CD4-positive, alpha-beta T cell (primary cell): ENCODE measurements at regions of chr2 and their contacts with region 1.

Region 1: DNA sequence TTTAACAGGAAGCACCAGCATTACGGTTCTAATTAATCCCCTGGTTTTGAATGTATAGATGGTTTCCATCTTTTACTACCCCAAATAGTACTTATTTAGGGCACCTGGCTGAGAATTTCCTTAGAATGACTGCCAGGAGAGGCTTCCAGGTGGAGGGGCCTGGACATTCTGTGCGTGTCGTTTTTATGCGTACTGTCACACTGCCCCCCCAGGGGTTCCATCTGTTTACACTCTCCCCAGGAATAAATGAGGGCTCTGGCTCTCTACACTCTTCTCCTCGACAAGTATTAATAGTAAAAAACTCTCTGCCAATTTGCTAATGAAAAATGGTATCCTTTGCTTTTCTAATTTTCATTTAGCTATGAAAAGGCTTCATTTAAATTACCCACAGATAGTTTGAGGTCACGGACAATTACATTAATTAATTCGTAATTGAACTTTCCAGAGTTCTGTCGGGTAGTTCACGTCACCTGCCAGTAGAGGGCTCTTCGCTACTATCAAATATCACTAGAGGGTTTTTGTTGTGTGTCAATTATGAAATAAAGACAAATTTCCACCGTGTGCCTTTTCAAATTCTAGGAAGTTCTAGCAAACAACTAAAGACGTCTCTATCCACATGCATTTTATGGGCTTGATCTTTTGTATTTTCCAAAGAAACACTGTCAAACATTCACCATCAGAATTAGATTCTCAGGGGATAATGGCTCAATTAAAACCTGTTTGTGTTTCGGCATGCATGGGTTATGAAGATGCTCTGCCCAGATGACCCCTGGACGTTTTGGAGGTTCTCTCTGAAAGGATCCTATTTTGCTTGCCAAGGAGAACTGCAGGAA is 88.8 kb upstream of the ASB18 start:
- DNase-seq: peak in 8 of 14 experiments; percentile 18 to 70 (median 35)
- ATAC-seq: peak; percentile 63
- H3K4me3 ChIP-seq: no peak overlapping the region
- H3K4me3 Mint-ChIP-seq: no peak overlapping the region
- H3K27ac ChIP-seq: no peak overlapping the region
- H3K27ac Mint-ChIP-seq: no peak overlapping the region
- H3K4me1 ChIP-seq: no peaks in the 10 kb centered on the region
- H3K4me1 Mint-ChIP-seq: peaks cover 6% of the 10 kb centered on the region
- H3K27me3 ChIP-seq: peaks cover 5 to 6% of the 10 kb centered on the region in 2 experiments
- H3K27me3 Mint-ChIP-seq: peaks cover 13% of the 10 kb centered on the region
- CTCF ChIP-seq: peak; percentile 97

Region 2: GRCh38 chr2:236240228-236241038 is 112.5 kb before region 1 on chr2:
- CTCF ChIA-PET with region 1: no interaction called
- POLR2A ChIA-PET with region 1: no interaction called
- intact Hi-C with region 1: no loop called
- DNase-seq: no peak
- ATAC-seq: no peak
- H3K4me3 ChIP-seq: no peak overlapping the region
- H3K4me3 Mint-ChIP-seq: no peak overlapping the region
- H3K27ac ChIP-seq: no peak overlapping the region
- H3K27ac Mint-ChIP-seq: no peak overlapping the region
- H3K4me1 ChIP-seq: no peaks in the 10 kb centered on the region
- H3K4me1 Mint-ChIP-seq: no peaks in the 10 kb centered on the region
- H3K27me3 ChIP-seq: peaks cover 22 to 42% of the 10 kb centered on the region in 2 experiments
- H3K27me3 Mint-ChIP-seq: peaks cover 55% of the 10 kb centered on the region
- CTCF ChIP-seq: no peak

Region 3: GRCh38 chr2:236298924-236299475 is 54.0 kb before region 1 on chr2:
- CTCF ChIA-PET with region 1: no interaction called
- POLR2A ChIA-PET with region 1: no interaction called
- intact Hi-C with region 1: no loop called
- DNase-seq: no peak
- ATAC-seq: no peak
- H3K4me3 ChIP-seq: no peak overlapping the region
- H3K4me3 Mint-ChIP-seq: no peak overlapping the region
- H3K27ac ChIP-seq: no peak overlapping the region
- H3K27ac Mint-ChIP-seq: no peak overlapping the region
- H3K4me1 ChIP-seq: no peaks in the 10 kb centered on the region
- H3K4me1 Mint-ChIP-seq: no peaks in the 10 kb centered on the region
- H3K27me3 ChIP-seq: peaks cover 0 to 3% of the 10 kb centered on the region in 2 experiments
- H3K27me3 Mint-ChIP-seq: peaks cover 25% of the 10 kb centered on the region
- CTCF ChIP-seq: no peak

Region 4: DNA sequence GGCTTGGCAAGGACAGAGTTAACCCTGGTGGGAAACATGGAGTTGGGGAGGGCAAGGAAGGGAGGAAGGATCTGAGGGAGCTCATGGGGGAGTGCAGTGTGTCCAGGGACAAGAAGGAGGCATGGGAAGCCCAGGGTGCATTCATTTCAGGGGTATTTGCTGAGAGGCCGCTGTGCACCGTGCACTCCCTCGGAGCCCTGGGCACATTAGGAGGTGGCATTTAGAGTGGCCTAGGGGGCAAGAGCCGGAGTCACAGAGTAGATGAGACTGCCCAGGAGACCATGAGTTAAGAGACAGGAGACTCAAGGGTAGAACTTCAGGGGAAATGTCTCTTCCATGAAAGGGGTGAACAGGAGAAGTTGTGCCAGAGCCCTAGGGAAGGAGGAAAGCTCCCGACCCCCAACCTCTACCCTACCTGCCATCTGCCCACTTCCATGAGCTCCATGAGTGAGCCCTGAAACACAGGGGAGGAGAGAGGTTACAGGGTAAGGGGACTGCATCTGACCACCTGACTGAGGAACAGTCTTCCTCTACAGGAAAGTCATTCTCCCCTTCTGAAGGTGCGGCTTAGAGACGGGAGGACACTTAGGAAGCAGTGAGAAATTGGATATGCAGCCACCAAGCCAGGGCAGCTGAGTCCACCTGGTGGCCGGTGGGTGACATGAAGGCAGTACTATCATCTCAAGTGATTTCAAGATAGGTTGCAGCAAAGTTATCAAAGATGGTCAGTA is 674.2 kb after region 1 on chr2:
- CTCF ChIA-PET with region 1: interaction called, 8 read pairs
- POLR2A ChIA-PET with region 1: no interaction called
- intact Hi-C with region 1: loop called (anchors 1 to 2 kb)
- DNase-seq: peak; percentile 11 to 64 (median 36)
- ATAC-seq: peak; percentile 61
- H3K4me3 ChIP-seq: no peak overlapping the region
- H3K4me3 Mint-ChIP-seq: no peak overlapping the region
- H3K27ac ChIP-seq: no peak overlapping the region
- H3K27ac Mint-ChIP-seq: no peak overlapping the region
- H3K4me1 ChIP-seq: no peaks in the 10 kb centered on the region
- H3K4me1 Mint-ChIP-seq: no peaks in the 10 kb centered on the region
- H3K27me3 ChIP-seq: no peaks in the 10 kb centered on the region
- H3K27me3 Mint-ChIP-seq: no peaks in the 10 kb centered on the region
- CTCF ChIP-seq: peak; percentile 61

Region 5: GRCh38 chr2:237060534-237061312 is 707.7 kb after region 1 on chr2:
- CTCF ChIA-PET with region 1: no interaction called
- POLR2A ChIA-PET with region 1: no interaction called
- intact Hi-C with region 1: loop called (anchors 1 kb)
- DNase-seq: peak in 7 of 14 experiments; percentile 6 to 62 (median 23)
- ATAC-seq: peak; percentile 48
- H3K4me3 ChIP-seq: no peak overlapping the region
- H3K4me3 Mint-ChIP-seq: no peak overlapping the region
- H3K27ac ChIP-seq: no peak overlapping the region
- H3K27ac Mint-ChIP-seq: no peak overlapping the region
- H3K4me1 ChIP-seq: peaks cover 5% of the 10 kb centered on the region
- H3K4me1 Mint-ChIP-seq: no peaks in the 10 kb centered on the region
- H3K27me3 ChIP-seq: no peaks in the 10 kb centered on the region
- H3K27me3 Mint-ChIP-seq: peaks cover 5% of the 10 kb centered on the region
- CTCF ChIP-seq: peak; percentile 51

Region 6: DNA sequence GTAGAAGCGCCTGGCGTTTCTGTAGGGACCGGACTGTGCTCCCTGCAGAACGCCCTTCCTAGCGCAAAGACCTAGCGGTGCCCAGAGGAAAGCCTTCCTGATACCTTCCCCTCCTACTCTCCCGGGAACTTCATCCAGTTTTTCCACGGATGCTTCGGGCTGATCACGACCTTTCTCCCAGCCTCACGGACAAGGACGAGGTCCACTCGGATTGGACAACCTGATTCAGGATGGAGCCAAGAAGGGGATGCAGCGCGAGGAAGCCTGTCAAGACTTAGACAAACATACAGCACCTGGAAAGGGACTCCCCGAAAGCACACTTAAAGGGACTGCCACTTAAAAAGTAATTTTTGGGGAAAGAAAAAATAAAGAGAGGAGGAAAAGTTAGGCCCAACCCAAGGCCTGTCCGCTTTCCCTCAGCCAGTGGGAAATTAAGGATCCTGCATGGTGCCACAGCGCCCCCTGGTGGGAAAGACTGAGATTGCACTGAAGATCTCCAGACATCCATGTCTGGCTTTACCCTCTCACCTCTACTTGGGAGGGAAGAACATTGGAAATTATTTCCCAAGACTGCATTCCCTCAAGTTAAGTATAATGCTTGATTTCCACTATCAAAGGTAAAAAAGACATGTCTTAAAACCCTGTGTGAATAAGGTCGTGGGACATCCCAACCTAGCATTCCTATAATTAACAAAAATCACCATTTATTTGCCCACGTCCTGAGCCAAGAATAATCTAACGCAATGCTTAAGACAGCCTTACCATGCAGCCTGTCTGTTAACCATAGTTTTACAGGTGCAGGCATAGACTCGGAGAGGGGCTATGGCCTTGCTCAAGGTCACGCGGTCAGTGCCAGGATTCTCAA is 719.3 kb after region 1 on chr2:
- CTCF ChIA-PET with region 1: no interaction called
- POLR2A ChIA-PET with region 1: no interaction called
- intact Hi-C with region 1: loop called (anchors 1 kb)
- DNase-seq: peak; percentile 49 to 82 (median 68)
- ATAC-seq: peak; percentile 48
- H3K4me3 ChIP-seq: no peak overlapping the region
- H3K4me3 Mint-ChIP-seq: no peak overlapping the region
- H3K27ac ChIP-seq: no peak overlapping the region
- H3K27ac Mint-ChIP-seq: no peak overlapping the region
- H3K4me1 ChIP-seq: no peaks in the 10 kb centered on the region
- H3K4me1 Mint-ChIP-seq: no peaks in the 10 kb centered on the region
- H3K27me3 ChIP-seq: no peaks in the 10 kb centered on the region
- H3K27me3 Mint-ChIP-seq: no peaks in the 10 kb centered on the region
- CTCF ChIP-seq: peak; percentile 98